Lower leg skin (tissue), 4 donors: ENCODE measurements at regions of chr2 and their contacts with region 1.

Region 1: GRCh38 chr2:123935405-123935804 is 89.7 kb upstream of the CNTNAP5 start:
- DNase-seq: no peak
- H3K4me3 ChIP-seq: no peak overlapping the region
- CTCF ChIP-seq: no peak
- POLR2A ChIP-seq: no peak

Region 2: DNA sequence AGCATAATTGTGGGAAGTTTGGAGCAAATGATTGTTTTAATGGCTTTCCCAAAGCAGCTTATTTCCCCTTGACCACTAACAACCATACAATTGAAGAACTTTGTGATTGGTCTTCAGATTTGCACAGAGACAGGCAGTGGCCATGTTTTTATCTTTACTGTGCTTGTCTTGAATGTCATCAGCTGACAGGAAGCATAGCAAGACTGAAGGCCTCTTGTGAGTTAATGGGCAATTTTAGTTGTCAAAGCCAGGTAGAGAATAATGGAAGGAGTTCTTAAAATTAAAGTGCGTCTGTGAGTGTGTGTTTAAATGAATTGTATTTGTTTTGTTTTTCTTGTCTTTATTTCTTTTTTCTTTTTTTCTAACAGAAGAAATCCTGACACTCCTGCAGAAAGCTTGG is 1370.0 kb before region 1 on chr2:
- intact Hi-C with region 1: loop called (anchors 5 kb)
- DNase-seq: no peak
- H3K4me3 ChIP-seq: no peak overlapping the region
- CTCF ChIP-seq: no peak
- POLR2A ChIP-seq: no peak

Region 3: GRCh38 chr2:123771928-123772632 is 163.3 kb before region 1 on chr2:
- intact Hi-C with region 1: no loop called
- DNase-seq: no peak
- H3K4me3 ChIP-seq: no peak overlapping the region
- CTCF ChIP-seq: no peak
- POLR2A ChIP-seq: no peak

Region 4: DNA sequence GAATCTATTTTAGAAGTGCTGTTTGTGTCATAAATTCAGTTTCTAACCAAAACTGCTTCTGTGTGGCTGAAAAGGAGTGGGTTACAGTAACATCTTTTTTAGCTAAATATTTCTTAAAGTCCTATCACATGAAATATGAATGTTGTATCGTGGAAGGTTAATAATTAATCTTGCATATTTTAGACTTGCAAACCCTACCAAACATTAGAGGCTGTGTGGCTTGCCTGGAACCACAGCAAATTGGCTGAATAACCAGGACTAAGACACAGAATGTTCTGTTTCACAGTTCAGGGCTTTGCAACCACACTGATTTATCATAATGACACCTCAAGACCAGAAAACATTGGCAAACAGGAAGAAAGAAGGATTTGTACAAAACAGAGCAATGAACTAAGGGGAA is 119.2 kb before region 1 on chr2:
- intact Hi-C with region 1: no loop called
- DNase-seq: no peak
- H3K4me3 ChIP-seq: no peak overlapping the region
- CTCF ChIP-seq: no peak
- POLR2A ChIP-seq: no peak